Panc1 (cell line): ENCODE measurements at regions of chr14 and their contacts with region 1.

Region 1: DNA sequence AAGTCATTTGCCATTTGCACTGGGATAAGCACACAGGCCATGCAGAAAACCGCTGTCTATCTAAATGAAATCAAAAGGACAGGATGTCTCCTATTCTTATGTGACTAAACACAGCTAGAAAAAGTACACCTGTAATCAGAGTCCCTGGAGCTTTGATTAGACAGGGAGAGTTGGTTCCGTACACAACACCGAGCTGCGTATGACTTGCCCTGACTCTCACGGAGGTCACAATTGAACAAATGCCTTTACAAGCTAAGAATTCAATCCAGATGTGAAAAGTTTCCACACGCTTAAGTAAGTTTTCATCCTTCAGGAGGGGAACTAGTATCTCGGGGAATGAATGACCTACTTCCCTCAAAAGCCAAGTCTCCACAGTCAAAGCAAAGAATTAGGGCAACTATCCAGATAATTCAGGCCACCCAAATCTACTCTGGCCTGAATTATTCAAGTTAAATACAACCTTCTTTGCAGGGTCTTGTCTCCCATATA is 67.5 kb downstream of the RTN1 start:
- DNase-seq: no peak
- ATAC-seq: no peak
- H3K4me3 ChIP-seq: no peak overlapping the region
- H3K27ac ChIP-seq: no peak overlapping the region
- H3K4me1 ChIP-seq: no peaks in the 10 kb centered on the region
- H3K27me3 ChIP-seq: no peaks in the 10 kb centered on the region
- CTCF ChIP-seq: no peak

Region 2: DNA sequence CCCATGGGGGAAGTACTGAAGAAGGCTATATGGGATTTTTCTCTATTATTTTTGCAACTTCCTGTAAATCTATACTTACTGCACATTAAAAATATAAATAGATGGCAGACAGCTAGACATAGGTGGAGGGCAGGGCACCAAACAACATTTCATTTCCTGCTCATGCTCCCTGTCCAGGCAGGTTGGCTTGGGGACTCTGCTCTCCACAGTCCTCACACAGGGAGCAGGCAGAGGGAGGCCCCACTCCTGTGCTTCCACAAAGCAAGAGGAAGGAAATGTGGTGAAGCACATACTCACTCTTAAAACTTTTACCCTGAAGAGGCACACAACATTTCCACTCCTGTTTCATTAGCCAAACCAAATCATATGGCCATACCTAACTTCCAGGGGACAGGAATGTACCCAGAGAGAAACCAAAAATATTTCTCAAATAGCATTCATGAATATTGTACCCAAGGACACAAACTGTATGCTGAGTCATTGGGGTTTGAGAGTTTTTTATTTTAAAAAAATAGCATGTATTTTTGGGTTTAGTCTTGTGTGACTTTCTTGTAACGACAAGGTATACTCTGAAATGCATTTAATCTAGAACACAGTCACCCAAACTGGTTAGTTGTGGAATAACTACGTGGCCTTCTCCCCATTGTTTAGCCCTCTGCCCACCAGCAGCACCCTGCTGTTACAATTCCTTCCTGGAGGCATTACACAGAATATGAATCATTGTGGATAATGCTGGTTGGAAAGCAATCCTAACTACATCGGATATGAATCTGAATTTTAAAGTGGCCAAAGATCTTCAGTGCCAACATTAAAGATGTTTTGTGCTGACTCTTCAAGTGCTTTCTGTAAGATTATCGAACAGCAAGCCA is 26.6 kb after region 1 on chr14:
- CTCF ChIA-PET with region 1: no interaction called
- POLR2A ChIA-PET with region 1: no interaction called
- in situ Hi-C with region 1: no loop called
- intact Hi-C with region 1: loop called (anchors 1 kb)
- DNase-seq: no peak
- ATAC-seq: no peak
- H3K4me3 ChIP-seq: no peak overlapping the region
- H3K27ac ChIP-seq: no peak overlapping the region
- H3K4me1 ChIP-seq: no peaks in the 10 kb centered on the region
- H3K27me3 ChIP-seq: no peaks in the 10 kb centered on the region
- CTCF ChIP-seq: no peak